ENCODE measurements at regions of chr12 and their contacts with region 1.

Region 1: GRCh38 chr12:112012775-112013600 is at the starts of genes ERP29 and TMEM116:
- DNase-seq: peak; percentile 99
- H3K4me3 ChIP-seq: peak within 1 kb of the TSS; percentile 88
- H3K27ac ChIP-seq: peak within 1 kb of the TSS; percentile 92
- H3K4me1 ChIP-seq: peaks cover 29% of the 10 kb centered on the region
- CTCF ChIP-seq: peak; percentile 49
- total RNA-seq, gene ERP29: 72.1 and 112 TPM in 2 replicates
- total RNA-seq, gene TMEM116: 8.8 and 9.0 TPM in 2 replicates

Region 2: GRCh38 chr12:111730420-111730819 is 282.6 kb before region 1 on chr12:
- CTCF ChIA-PET with region 1: no interaction called
- POLR2A ChIA-PET with region 1: interaction called, 4 read pairs
- intact Hi-C with region 1: loop called (anchors 1 kb)
- DNase-seq: peak; percentile 89
- H3K4me3 ChIP-seq: peak overlapping the region; percentile 11
- H3K27ac ChIP-seq: peak overlapping the region; percentile 93
- H3K4me1 ChIP-seq: peaks cover 53% of the 10 kb centered on the region
- CTCF ChIP-seq: no peak

Region 3: GRCh38 chr12:111942557-111942956 is 70.4 kb before region 1 on chr12:
- CTCF ChIA-PET with region 1: no interaction called
- POLR2A ChIA-PET with region 1: no interaction called
- intact Hi-C with region 1: loop called (anchors 2 kb)
- DNase-seq: no peak
- H3K4me3 ChIP-seq: no peak overlapping the region
- H3K27ac ChIP-seq: no peak overlapping the region
- H3K4me1 ChIP-seq: no peaks in the 10 kb centered on the region
- CTCF ChIP-seq: no peak

Region 4: GRCh38 chr12:112001576-112001975 is 11.4 kb before region 1 on chr12:
- CTCF ChIA-PET with region 1: no interaction called
- POLR2A ChIA-PET with region 1: interaction called, 23 read pairs
- intact Hi-C with region 1: no loop called
- DNase-seq: no peak
- H3K4me3 ChIP-seq: no peak overlapping the region
- H3K27ac ChIP-seq: no peak overlapping the region
- H3K4me1 ChIP-seq: no peaks in the 10 kb centered on the region
- CTCF ChIP-seq: no peak

Region 5: GRCh38 chr12:112061137-112061536 is 48.1 kb after region 1 on chr12:
- CTCF ChIA-PET with region 1: no interaction called
- POLR2A ChIA-PET with region 1: no interaction called
- intact Hi-C with region 1: no loop called
- DNase-seq: no peak
- H3K4me3 ChIP-seq: no peak overlapping the region
- H3K27ac ChIP-seq: no peak overlapping the region
- H3K4me1 ChIP-seq: no peaks in the 10 kb centered on the region
- CTCF ChIP-seq: no peak

Region 6: GRCh38 chr12:112409064-112409905 is 396.3 kb after region 1 on chr12 and contains the start of gene RPL6:
- CTCF ChIA-PET with region 1: no interaction called
- POLR2A ChIA-PET with region 1: no interaction called
- intact Hi-C with region 1: loop called (anchors 2 kb)
- DNase-seq: peak; percentile 94
- H3K4me3 ChIP-seq: peak within 1 kb of the TSS; percentile 81
- H3K27ac ChIP-seq: peak within 1 kb of the TSS; percentile 70
- H3K4me1 ChIP-seq: peaks cover 33% of the 10 kb centered on the region
- CTCF ChIP-seq: no peak
- total RNA-seq, gene RPL6: 1,415 and 1,436 TPM in 2 replicates